ENCODE measurements at regions of chr5 and their contacts with region 1.

Region 1: DNA sequence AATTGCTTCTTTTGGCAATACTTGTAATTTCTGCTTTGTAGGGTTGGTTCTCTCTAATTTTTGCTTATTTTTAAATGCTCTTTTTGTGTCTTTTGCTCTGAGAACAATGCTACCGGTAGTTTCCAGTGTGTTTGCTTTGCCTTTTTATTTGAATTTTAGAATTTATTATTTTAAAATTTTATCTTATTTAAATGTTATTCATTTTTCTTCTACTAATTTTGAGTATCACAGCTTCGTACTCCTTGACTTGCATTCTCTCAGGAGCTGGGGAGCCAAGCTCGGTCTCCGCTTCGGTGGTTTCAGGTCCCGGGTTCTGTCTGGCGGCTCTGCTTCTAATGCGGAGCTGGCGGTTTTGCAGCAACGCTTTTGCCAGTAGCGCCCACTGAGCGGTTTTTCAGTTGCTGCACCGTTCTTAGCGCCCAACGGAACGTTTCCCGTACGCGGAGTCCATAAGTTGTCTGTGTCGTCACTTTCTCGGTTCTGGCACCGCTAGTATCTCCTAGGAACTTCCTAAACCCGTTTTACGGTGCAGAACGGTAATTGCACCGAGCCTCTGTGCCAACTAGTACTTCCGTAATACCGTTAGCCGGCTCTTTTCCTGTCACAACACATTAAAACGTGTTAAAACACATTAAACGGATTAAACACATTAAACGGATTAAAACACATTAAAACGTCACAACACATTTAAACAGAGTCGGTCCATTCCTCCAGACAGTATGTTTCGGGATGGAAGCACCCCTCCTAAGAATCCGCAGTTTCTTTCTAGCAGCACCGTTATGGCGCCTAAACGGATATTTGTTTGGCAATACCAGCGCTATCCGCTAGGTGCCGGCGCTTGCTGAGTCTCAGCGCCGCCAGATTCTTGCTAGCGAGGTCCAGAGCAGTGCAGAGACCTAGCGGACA is 45.6 kb downstream of the ANXA2R start:
- DNase-seq: peak; percentile 90
- H3K4me3 ChIP-seq: peak overlapping the region; percentile 10 to 53 (median 29)
- H3K27ac ChIP-seq: peak overlapping the region; percentile 61 to 88 (median 73)
- H3K4me1 ChIP-seq: peaks cover 0 to 28% (median 16%) of the 10 kb centered on the region in 4 donors
- H3K27me3 ChIP-seq: peaks cover 46 to 100% (median 90%) of the 10 kb centered on the region in 3 donors
- CTCF ChIP-seq: peak; percentile 57 to 86 (median 81)
- EP300 ChIP-seq: no peak
- POLR2A ChIP-seq: no peak

Region 2: DNA sequence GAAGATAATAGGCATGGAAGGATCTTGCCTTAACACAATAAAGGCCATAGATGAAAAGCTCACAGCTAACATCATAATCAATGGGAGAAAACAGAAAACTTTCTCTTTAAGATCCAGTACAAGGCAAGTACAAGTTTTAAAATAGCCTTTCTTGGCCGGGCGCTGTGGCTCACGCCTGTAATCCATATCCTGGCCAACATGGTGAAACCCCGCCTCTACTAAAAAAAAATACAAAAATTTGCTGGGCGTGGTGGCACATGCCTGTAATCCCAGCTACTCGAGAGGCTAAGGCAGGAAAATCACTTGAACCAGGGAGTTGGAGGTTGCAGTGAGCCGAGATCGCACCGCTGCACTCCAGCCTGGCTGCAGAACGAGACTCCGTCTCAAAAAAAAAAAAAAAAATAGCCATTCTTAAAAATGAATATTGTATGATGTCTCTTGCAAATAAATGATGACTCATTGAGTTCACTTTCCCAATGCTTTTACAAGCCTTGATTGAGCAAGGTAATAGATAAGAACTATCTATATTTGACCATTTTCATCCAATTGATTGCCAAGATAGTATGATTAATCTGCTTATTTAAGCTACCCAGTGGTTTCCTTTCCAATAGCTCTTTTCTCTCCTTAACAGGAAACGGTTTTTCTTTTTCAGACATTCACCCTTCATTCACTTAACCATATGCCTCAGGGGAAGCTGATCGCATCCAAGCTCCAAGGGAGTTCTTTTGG is 222.1 kb before region 1 on chr5:
- intact Hi-C with region 1: no loop called
- DNase-seq: no peak
- H3K4me3 ChIP-seq: no peak overlapping the region
- H3K27ac ChIP-seq: no peak overlapping the region
- H3K4me1 ChIP-seq: no peaks in the 10 kb centered on the region
- H3K27me3 ChIP-seq: no peaks in the 10 kb centered on the region
- CTCF ChIP-seq: no peak
- EP300 ChIP-seq: no peak
- POLR2A ChIP-seq: no peak

Region 3: GRCh38 chr5:42908509-42909488 is 85.7 kb before region 1 on chr5:
- intact Hi-C with region 1: loop called (anchors 5 kb)
- DNase-seq: peak; percentile 94
- H3K4me3 ChIP-seq: peak overlapping the region; percentile 32 to 51 (median 47)
- H3K27ac ChIP-seq: no peak overlapping the region
- H3K4me1 ChIP-seq: peaks cover 0 to 5% (median 4%) of the 10 kb centered on the region in 4 donors
- H3K27me3 ChIP-seq: peaks cover 0 to 7% (median 0%) of the 10 kb centered on the region in 3 donors
- CTCF ChIP-seq: peak; percentile 65 to 86 (median 79)
- EP300 ChIP-seq: no peak
- POLR2A ChIP-seq: no peak

Region 4: GRCh38 chr5:42950440-42951292 is 43.8 kb before region 1 on chr5:
- intact Hi-C with region 1: loop called (anchors 2 kb)
- DNase-seq: peak; percentile 85
- H3K4me3 ChIP-seq: peak overlapping the region; percentile 25 to 48 (median 40)
- H3K27ac ChIP-seq: peak overlapping the region; percentile 63 to 84 (median 68)
- H3K4me1 ChIP-seq: peaks cover 0 to 35% (median 32%) of the 10 kb centered on the region in 4 donors
- H3K27me3 ChIP-seq: peaks cover 52 to 100% (median 92%) of the 10 kb centered on the region in 3 donors
- CTCF ChIP-seq: no peak
- EP300 ChIP-seq: no peak
- POLR2A ChIP-seq: no peak

Region 5: GRCh38 chr5:43066799-43067741 is 72.6 kb after region 1 on chr5:
- intact Hi-C with region 1: loop called (anchors 2 kb)
- DNase-seq: peak; percentile 93
- H3K4me3 ChIP-seq: peak overlapping the region; percentile 65 to 91 (median 80)
- H3K27ac ChIP-seq: peak overlapping the region; percentile 94 to 100 (median 98)
- H3K4me1 ChIP-seq: peaks cover 0 to 38% (median 25%) of the 10 kb centered on the region in 4 donors
- H3K27me3 ChIP-seq: no peaks in the 10 kb centered on the region
- CTCF ChIP-seq: no peak
- EP300 ChIP-seq: no peak
- POLR2A ChIP-seq: peak; percentile 78 to 83

Region 6: DNA sequence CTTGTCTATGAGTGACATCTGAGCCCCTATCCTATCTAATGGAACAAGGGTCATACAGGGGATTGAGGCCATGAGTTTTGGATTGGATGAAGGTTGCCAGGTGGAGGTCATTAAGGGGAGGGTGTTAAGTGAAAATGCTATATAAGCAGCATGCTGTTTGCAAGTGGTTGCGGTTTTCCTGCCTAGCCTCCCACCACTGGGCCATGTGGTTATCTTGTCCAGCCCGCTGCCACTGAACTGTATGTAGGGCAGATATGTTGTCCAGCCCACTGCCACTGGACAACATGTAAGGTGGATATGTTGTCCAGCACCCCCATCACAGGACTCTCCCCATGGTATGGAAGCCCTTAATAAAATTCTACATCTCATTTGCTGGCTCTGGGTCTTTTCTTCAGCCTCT is 1194.8 kb after region 1 on chr5:
- intact Hi-C with region 1: no loop called
- DNase-seq: no peak
- H3K4me3 ChIP-seq: no peak overlapping the region
- H3K27ac ChIP-seq: no peak overlapping the region
- H3K4me1 ChIP-seq: no peaks in the 10 kb centered on the region
- H3K27me3 ChIP-seq: no peaks in the 10 kb centered on the region
- CTCF ChIP-seq: no peak
- EP300 ChIP-seq: no peak
- POLR2A ChIP-seq: no peak